Aorta (tissue), 5 donors: ENCODE measurements at regions of chr1 and their contacts with region 1.

Region 1: GRCh38 chr1:63773815-63774616 is at the start of gene ROR1:
- DNase-seq: peak; percentile 93 to 96
- ATAC-seq: peak; percentile 96
- H3K4me3 ChIP-seq: peak within 1 kb of the TSS; percentile 77 to 95
- H3K27ac ChIP-seq: peak within 1 kb of the TSS; percentile 65 to 99
- H3K4me1 ChIP-seq: no peaks in the 10 kb centered on the region
- H3K27me3 ChIP-seq: no peaks in the 10 kb centered on the region
- total RNA-seq, gene ROR1: 18.7 to 30.9 TPM

Region 2: GRCh38 chr1:63691701-63692425 is 82.2 kb before region 1 on chr1:
- intact Hi-C with region 1: loop called (anchors 5 kb)
- DNase-seq: no peak
- ATAC-seq: peak; percentile 92
- H3K4me3 ChIP-seq: no peak overlapping the region
- H3K27ac ChIP-seq: peak overlapping the region in 1 of 2 donors; percentile 63
- H3K4me1 ChIP-seq: no peaks in the 10 kb centered on the region
- H3K27me3 ChIP-seq: no peaks in the 10 kb centered on the region

Region 3: DNA sequence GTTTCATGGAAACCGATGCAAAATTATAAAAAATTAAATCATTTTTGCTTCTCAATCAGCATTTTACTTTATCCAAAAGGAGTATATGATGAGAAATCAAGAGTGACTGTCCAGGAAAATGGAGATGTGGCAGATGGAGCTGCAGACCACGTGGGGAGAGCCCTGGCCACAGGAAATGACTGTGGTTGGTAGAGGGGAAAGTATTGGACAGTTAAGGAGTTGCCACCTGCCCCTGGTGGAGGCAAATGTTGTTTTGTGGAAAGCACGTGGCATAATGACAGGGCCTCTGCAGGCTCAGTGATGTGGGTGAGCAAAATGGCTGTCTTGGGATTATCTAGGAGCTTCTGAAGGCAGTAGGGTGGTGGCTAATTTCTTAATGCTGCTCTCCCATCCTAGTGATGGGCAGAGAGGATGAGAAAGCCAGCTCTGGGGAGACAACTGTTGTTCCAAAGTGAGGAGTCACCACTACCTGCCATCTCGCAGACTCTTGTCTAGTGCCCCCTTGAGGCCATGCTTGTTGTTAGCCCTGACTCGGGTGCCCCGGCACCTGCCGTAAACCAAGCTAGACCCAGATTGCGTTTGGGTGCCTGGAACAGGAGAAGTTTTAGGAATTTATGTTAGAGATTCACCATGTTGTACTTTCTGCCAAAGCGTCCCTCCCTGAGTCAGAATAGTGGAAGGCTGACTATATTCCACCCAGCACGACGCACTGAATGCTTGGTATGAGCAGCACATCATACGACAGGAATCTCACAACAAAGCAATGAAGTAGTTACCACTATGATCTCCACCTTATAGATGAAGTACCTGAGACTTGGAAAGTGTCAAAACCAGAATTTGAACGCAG is 143.8 kb after region 1 on chr1:
- intact Hi-C with region 1: loop called (anchors 2 to 5 kb)
- DNase-seq: no peak
- ATAC-seq: peak; percentile 33
- H3K4me3 ChIP-seq: no peak overlapping the region
- H3K27ac ChIP-seq: peak overlapping the region; percentile 29 to 98
- H3K4me1 ChIP-seq: peaks cover 7 to 9% of the 10 kb centered on the region in 2 donors
- H3K27me3 ChIP-seq: no peaks in the 10 kb centered on the region

Region 4: DNA sequence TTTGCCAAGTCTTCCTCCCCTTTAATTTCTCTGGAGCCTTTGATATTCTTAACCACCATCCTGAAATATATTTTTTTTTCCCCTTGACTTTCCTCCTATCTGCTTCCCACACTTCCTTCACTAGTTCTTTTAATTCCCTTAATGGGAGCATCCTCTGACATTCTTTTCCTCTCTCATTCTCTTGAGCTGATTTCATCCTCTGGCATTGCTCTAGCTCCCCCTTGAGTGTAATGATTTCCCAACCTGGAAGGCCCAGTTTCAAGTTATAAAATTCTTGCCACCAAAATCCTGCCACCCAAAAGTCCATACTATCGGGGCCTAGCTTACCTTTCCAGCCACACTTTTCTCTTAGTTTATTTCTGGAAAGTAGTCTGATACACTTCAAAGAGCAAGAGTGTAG is 390.0 kb after region 1 on chr1:
- intact Hi-C with region 1: loop called in 1 of 2 experiments (anchors 10 kb)
- DNase-seq: no peak
- ATAC-seq: peak; percentile 51
- H3K4me3 ChIP-seq: no peak overlapping the region
- H3K27ac ChIP-seq: no peak overlapping the region
- H3K4me1 ChIP-seq: peaks cover 6 to 10% of the 10 kb centered on the region in 2 donors
- H3K27me3 ChIP-seq: no peaks in the 10 kb centered on the region